ENCODE measurements at regions of chrX and their contacts with region 1.

Region 1: GRCh38 chrX:134026565-134027311 is 41.3 kb upstream of the GPC3 start:
- DNase-seq: peak; percentile 73

Region 2: GRCh38 chrX:133970076-133970475 is 56.7 kb before region 1 on chrX:
- CTCF ChIA-PET with region 1: interaction called, 14 read pairs
- POLR2A ChIA-PET with region 1: interaction called, 5 read pairs
- DNase-seq: no peak

Region 3: DNA sequence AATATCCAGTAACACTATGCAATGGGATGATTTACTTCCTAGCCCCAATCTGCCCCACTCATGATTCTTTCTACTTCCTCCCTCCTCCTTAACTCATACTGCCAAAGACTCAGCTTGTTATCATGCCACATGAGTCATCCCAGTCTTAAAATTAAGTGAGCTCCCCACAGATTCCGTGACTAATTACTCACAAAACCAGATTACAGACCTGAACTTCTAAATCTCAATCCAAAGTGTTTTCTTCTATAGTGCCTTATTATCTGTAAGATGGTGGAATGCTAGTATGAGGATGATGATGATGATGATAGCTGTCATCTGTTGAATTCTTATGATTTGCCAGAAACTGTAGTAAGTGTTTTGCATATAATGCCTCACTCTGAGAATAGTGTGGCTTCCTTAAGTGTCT is 13.6 kb before region 1 on chrX:
- CTCF ChIA-PET with region 1: interaction called, 16 read pairs
- POLR2A ChIA-PET with region 1: no interaction called
- DNase-seq: no peak

Region 4: GRCh38 chrX:134294548-134294947 is 267.8 kb after region 1 on chrX:
- CTCF ChIA-PET with region 1: no interaction called
- POLR2A ChIA-PET with region 1: no interaction called
- DNase-seq: peak; percentile 27